MCF 10A (cell line): ENCODE measurements at regions of chr1 and their contacts with region 1.

Region 1: GRCh38 chr1:73100216-73100615 is 817.9 kb upstream of the NEGR1 start:
- DNase-seq: peak; percentile 7
- H3K4me3 Mint-ChIP-seq: no peak overlapping the region
- H3K27ac Mint-ChIP-seq: no peak overlapping the region
- H3K4me1 Mint-ChIP-seq: no peaks in the 10 kb centered on the region
- H3K27me3 Mint-ChIP-seq: no peaks in the 10 kb centered on the region
- CTCF ChIP-seq: peak; percentile 37

Region 2: GRCh38 chr1:72623299-72623708 is 476.9 kb before region 1 on chr1:
- CTCF ChIA-PET with region 1: interaction called, 10 read pairs
- POLR2A ChIA-PET with region 1: no interaction called
- intact Hi-C with region 1: loop called (anchors 1 kb)
- DNase-seq: peak; percentile 67
- H3K4me3 Mint-ChIP-seq: peak overlapping the region; percentile 24
- H3K27ac Mint-ChIP-seq: no peak overlapping the region
- H3K4me1 Mint-ChIP-seq: peaks cover 6% of the 10 kb centered on the region
- H3K27me3 Mint-ChIP-seq: peaks cover 21% of the 10 kb centered on the region
- CTCF ChIP-seq: peak; percentile 48